ENCODE measurements at regions of chr9 and their contacts with region 1.

Region 1: DNA sequence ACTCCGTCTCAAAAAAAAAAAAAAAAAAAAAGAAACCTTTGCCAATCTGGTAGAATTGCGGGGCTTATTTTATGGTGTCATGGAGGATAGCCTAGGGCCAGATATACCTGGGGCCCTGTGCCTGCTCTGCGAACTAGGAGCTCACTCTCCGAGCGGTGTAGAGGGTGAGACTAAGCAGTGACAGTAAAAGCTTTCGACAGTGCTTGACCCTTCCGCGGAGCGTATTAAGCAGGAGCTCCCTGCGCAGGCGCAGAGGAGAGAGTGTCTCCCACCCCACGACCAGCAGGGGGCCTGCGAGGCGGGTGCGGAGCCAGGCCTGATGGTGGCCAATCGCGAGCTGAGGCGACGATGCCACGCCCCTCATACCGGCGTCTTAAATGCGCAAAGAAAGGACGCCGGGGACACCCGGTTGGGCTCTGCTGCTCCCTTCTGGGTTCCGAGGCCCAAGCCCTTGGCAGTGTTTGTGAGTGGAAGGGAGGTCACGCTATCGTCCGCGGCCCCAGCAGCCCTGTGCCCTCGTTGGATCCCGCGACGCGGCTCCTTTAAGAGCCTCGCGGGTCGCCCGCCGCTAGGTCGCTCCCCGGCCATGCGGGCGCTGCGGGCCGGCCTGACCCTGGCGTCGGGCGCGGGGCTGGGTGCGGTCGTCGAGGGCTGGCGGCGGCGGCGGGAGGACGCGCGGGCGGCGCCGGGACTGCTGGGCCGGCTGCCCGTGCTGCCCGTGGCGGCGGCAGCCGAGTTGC is at the start of gene ENDOG:
- DNase-seq: peak; percentile 98
- H3K4me3 Mint-ChIP-seq: peak within 1 kb of the TSS; percentile 81
- H3K27ac Mint-ChIP-seq: peak within 1 kb of the TSS; percentile 85
- H3K4me1 Mint-ChIP-seq: peaks cover 16% of the 10 kb centered on the region
- H3K27me3 Mint-ChIP-seq: no peaks in the 10 kb centered on the region
- total RNA-seq, gene ENDOG: 16.7 to 19.1 TPM

Region 2: DNA sequence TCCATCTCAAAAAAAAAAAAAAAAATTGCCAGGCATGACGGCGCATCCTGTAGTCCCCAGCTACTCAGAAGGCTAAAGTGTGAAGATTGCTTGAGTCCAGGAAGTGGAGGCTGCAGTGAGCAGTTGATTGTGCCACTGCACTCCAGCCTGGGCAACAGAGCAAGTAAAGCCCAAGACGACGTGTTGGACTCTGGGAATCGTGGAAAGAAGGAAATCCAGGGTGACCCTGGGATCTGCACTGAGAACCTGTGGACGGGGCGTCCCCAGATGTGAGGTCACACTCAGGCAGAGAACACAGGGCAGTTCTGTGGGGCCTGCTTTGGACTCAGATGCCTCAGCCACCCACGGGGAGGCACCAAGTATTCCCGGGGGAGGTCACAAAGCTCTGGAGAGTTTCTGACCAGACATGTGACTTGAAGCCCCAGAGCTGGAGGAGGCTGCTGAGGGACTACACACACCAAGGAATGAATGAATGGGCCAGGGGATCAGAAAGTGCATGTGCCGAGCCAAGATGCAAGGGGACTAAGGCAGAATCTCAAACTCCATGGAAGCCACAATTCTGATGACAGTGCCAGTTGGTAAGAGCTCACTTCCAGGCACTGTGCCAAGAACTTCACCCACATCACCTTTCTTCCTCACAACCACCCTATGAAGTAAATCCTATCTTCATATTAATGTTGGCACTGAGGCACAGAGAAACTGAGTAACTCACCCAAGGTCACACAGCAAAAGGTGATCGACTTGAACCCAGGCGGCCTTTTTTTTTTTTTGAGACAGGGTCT is 174.6 kb before region 1 on chr9:
- CTCF ChIA-PET with region 1: interaction called, 10 read pairs
- POLR2A ChIA-PET with region 1: interaction called, 5 read pairs
- DNase-seq: no peak
- H3K4me3 Mint-ChIP-seq: no peak overlapping the region
- H3K27ac Mint-ChIP-seq: peak overlapping the region; percentile 2
- H3K4me1 Mint-ChIP-seq: peaks cover 6% of the 10 kb centered on the region
- H3K27me3 Mint-ChIP-seq: no peaks in the 10 kb centered on the region

Region 3: DNA sequence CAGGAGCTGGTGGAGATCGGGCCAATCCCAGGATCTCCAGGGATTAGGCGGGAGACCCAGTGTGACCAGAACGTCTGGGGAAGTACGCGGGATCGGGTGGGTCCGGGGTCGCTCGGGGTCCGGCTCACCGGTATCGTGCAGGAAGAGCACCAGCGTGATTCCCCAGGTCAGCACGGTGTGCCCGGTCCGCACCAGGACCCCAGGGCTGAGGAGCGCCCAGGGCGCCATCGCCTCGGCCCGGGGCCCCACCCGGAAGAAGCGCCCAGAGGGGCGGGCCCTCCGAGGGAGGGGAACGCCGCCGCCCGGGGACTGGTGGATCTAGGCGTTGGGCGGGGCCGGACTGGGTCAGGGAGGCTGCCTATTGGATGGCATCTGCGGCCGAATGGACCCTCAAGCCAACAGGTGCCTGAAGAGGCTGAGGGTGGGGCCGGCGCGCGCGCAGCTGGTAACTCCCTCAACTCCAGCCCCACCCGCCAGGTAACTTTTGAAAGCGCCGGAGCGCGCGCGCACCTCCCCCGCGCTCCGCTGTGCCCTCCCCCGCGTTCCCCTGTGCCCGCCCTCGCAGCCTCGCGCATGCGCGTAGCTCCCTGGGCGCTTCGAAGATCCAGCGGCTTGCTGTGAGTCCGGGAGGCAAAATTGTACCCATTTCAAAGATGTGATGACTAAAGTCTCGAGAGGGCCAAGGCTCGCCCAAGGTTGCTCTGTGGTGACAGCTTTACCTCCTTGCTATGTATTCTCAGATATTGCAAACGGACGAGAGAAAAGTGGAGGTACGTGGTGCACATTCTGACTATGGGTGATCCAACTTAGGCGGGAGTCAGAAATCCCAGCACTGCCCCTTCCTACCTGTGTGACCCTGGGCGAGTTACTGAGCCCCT is 94.2 kb before region 1 on chr9 and contains the start of gene ZDHHC12:
- CTCF ChIA-PET with region 1: interaction called, 12 read pairs
- POLR2A ChIA-PET with region 1: interaction called, 17 read pairs
- DNase-seq: peak; percentile 100
- H3K4me3 Mint-ChIP-seq: peak within 1 kb of the TSS; percentile 97
- H3K27ac Mint-ChIP-seq: peak within 1 kb of the TSS; percentile 87
- H3K4me1 Mint-ChIP-seq: peaks cover 46% of the 10 kb centered on the region
- H3K27me3 Mint-ChIP-seq: no peaks in the 10 kb centered on the region
- total RNA-seq, gene ZDHHC12: 79.3 to 81.5 TPM

Region 4: GRCh38 chr9:128786681-128787601 is 31.3 kb before region 1 on chr9 and contains the start of gene TBC1D13:
- CTCF ChIA-PET with region 1: interaction called, 15 read pairs
- POLR2A ChIA-PET with region 1: interaction called, 7 read pairs
- DNase-seq: peak; percentile 89
- H3K4me3 Mint-ChIP-seq: peak within 1 kb of the TSS; percentile 93
- H3K27ac Mint-ChIP-seq: peak within 1 kb of the TSS; percentile 81
- H3K4me1 Mint-ChIP-seq: peaks cover 17% of the 10 kb centered on the region
- H3K27me3 Mint-ChIP-seq: no peaks in the 10 kb centered on the region
- total RNA-seq, gene TBC1D13: 18.0 to 21.4 TPM

Region 5: DNA sequence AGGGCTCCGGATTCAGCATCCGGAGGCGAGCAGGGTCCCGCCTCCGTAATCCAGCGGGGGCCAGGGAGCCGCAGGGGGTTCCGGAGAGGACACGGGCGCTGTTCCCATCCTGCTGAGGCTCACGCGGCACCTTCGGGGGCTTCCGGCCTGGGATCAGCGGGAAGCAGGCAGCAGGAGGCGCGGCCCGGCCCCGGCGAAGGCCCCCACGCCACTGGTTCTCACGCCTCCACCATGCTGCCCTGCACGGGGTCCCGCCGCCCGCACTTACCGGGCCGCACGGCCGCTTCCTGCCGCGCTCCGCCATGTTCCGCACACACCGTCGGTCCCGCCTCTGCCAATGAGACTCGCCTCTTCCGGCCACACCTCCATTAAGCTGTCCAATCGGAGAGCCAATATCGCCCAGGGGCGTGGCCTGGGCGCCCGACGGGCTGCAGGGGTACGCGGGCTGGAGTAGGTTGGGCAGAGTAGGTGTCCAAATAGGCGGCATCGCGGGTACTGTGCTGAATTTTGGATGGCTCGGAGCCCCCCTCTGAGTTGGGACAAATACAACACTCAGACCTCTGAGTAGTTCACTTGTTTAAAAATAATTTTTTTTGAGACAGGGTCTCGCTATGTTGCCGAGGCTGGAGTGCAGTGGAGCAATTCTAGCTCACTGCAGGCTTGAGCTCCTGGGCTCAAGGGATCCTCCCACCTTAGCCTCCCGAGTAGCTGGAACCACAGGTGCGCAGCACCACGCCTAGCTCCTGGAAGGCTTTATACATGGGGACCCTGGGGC is 11.4 kb after region 1 on chr9 and contains the start of gene SPOUT1:
- CTCF ChIA-PET with region 1: interaction called, 59 read pairs
- POLR2A ChIA-PET with region 1: interaction called, 37 read pairs
- DNase-seq: peak; percentile 95
- H3K4me3 Mint-ChIP-seq: peak within 1 kb of the TSS; percentile 97
- H3K27ac Mint-ChIP-seq: peak within 1 kb of the TSS; percentile 89
- H3K4me1 Mint-ChIP-seq: peaks cover 26% of the 10 kb centered on the region
- H3K27me3 Mint-ChIP-seq: no peaks in the 10 kb centered on the region
- total RNA-seq, gene SPOUT1: 54.3 to 59.2 TPM

Region 6: DNA sequence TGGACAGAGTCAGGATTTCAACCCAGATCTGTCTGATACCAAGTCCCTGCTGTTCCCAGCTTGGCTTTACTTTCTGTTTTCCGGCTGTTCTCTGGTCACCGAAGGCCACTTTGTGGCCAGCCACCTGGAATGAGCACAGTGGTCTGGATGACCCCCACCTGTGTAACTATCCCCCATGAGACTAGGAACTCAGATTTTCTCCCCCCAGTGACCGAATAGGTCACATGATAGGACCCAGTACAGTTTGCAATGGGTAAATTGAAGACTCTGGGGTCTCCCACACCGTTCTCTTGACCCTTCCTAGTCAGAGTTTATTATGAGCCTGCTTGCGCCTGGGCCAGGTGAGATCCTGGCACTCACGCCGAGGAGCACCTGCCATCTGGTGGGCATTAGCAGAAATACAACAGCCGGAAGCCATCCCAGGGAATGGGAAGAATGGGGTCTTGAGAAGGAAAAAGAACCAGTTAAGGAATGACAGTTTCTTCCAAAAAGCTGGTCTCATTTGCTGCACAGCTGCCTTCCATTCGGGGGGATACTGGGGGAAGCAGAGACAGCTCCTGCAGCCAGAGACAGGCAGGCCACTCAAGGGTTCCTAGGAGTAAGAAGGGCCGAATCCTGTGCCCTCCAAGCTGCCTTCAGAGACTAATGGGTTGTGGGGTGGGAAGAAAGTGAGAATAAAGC is 109.6 kb after region 1 on chr9:
- CTCF ChIA-PET with region 1: interaction called, 19 read pairs
- POLR2A ChIA-PET with region 1: no interaction called
- DNase-seq: peak; percentile 61
- H3K4me3 Mint-ChIP-seq: no peak overlapping the region
- H3K27ac Mint-ChIP-seq: no peak overlapping the region
- H3K4me1 Mint-ChIP-seq: peaks cover 18% of the 10 kb centered on the region
- H3K27me3 Mint-ChIP-seq: peaks cover 5% of the 10 kb centered on the region

Region 7: DNA sequence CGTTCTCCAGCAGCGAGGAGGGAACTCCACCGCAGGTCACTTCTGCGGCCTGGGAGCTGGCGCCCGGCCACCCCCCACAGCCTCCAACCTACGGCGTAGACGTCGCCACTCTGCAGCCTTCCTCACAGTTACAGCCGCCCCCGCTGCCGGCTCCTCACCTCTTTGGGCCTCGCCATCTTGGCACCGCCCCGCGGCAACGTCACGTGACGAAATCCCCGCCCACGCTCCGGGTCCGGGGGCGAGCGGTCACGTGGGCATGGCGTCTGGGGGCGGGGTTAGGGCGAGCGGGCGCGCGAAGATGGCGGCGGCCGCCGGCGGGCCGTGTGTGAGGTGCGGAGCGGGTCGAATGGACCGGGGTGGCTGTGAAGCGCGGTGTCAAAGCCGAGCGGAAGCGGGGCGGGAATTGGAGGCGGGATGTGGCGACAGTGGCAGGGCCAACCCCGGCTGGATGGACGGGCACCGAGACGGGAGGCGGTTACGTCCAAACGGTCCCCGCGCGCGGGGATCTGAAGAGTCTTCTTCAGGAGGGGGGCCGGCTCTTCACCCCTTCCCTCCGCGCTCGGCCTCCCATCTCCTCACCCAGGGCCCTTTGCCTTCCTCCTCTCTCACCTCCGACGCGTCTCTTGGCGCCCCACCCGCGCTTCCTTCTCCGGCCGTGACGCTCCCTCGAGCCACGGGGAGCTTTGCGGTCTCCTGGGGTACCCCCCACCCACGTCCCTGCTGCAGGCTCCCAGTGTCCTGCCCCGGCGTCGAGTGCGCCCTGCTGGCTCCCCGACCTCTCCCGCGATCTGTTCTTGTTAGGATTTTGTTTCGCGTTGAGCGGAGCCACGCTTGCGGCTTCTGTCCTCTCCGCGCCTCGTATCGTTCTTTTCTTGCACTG is 129.4 kb after region 1 on chr9 and contains the starts of genes DOLK and NUP188:
- CTCF ChIA-PET with region 1: interaction called, 11 read pairs
- POLR2A ChIA-PET with region 1: no interaction called
- DNase-seq: peak; percentile 98
- H3K4me3 Mint-ChIP-seq: peak within 1 kb of the TSS; percentile 79
- H3K27ac Mint-ChIP-seq: peak within 1 kb of the TSS; percentile 84
- H3K4me1 Mint-ChIP-seq: peaks cover 36% of the 10 kb centered on the region
- H3K27me3 Mint-ChIP-seq: no peaks in the 10 kb centered on the region
- total RNA-seq, gene DOLK: 7.0 TPM
- total RNA-seq, gene NUP188: 65.8 to 73.6 TPM

Measured in activated CD4-positive, alpha-beta memory T cell treated with anti-CD3 and anti-CD28 coated beads, Interleukin-2, amount 10 ng/mL, durations not matched to agents 7 days and 5 days (primary cell).